GM12878 (cell line): ENCODE measurements at regions of chr12 and their contacts with region 1.

Region 1: DNA sequence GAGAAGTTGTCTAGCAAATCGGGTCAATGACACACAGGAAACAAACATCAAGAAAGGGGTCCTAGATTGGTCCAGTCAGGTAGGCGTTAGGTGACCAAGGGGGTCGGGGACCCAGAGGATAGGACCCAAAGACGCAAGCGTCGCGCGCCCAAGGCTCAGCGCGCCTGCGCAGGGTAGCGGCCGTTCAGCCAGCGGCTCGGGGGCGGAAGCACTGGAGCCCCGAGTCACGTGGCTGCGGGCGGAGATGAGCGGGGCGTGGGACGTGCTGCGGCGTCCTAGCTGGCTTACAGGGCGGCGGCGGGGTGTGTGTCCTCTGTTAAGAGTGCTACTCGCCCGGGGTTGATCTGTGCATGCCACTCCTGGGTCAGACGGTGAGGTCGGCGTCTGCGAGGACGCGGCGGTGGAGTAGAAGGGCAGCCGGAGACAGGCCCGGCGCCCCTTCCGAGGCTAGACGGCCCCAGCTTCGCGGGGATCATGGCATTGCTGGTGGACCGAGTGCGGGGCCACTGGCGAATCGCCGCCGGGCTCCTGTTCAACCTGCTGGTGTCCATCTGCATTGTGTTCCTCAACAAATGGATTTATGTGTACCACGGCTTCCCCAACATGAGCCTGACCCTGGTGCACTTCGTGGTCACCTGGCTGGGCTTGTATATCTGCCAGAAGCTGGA is at the start of gene SLC35E3:
- DNase-seq: peak; percentile 77
- ATAC-seq: peak; percentile 99
- H3K4me3 ChIP-seq: peak within 1 kb of the TSS; percentile 84
- H3K27ac ChIP-seq: peak within 1 kb of the TSS; percentile 75
- H3K4me1 ChIP-seq: no peaks in the 10 kb centered on the region
- H3K27me3 ChIP-seq: no peaks in the 10 kb centered on the region
- CTCF ChIP-seq: no peak
- EP300 ChIP-seq: no peak
- POLR2A ChIP-seq: peak; percentile 91; the same call in 1 of the 2 replicates
- RAD21 ChIP-seq: no peak
- polyA plus RNA-seq, gene SLC35E3: 3.6 to 6.0 TPM

Region 2: DNA sequence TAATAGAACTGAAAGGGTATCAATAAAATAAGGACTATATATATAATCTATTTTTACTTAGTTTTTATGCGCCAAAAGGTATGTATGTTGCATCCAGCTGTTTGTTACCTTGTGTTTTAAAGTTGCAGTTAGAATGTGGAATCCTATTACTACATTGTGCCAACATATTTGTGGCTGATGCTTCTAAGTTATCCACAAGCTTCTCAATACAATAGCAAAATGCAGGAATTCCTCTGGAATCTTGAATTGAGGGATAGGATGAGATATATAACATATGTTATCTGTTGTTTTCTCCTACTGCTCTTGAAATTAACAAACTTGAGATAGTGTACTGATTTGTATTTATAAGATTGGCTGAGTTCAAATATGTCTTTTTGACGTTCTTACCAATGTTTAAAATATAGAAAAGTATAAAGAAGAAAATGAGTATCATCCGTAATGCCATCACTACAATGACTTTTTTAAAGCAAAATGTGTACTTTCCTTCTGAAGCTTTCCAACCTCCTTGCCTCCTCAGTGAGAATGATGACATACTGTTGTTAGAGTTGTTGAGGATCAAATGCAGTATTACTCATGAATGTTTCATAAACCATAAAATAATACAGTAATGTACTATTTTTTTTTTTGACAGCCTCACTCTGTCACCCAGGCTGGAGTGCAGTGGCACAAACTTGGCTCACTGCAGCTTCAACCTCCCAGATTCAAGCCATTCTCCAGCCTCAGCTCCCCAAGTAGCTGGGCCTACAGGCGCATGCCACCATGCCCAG is 128.7 kb before region 1 on chr12:
- CTCF ChIA-PET with region 1: no interaction called
- POLR2A ChIA-PET with region 1: interaction called, 12 read pairs
- RAD21 ChIA-PET with region 1: interaction called, 7 read pairs
- SMC1A ChIA-PET with region 1: no interaction called
- in situ Hi-C with region 1: no loop called
- intact Hi-C with region 1: no loop called
- DNase-seq: no peak
- ATAC-seq: no peak
- H3K4me3 ChIP-seq: no peak overlapping the region
- H3K27ac ChIP-seq: no peak overlapping the region
- H3K4me1 ChIP-seq: peaks cover 23% of the 10 kb centered on the region
- H3K27me3 ChIP-seq: no peaks in the 10 kb centered on the region
- CTCF ChIP-seq: no peak
- EP300 ChIP-seq: no peak
- POLR2A ChIP-seq: no peak
- RAD21 ChIP-seq: no peak

Region 3: GRCh38 chr12:68786929-68787328 is 40.9 kb after region 1 on chr12:
- CTCF ChIA-PET with region 1: interaction called, 5 read pairs
- POLR2A ChIA-PET with region 1: interaction called, 4 read pairs
- RAD21 ChIA-PET with region 1: interaction called, 3 read pairs
- SMC1A ChIA-PET with region 1: interaction called, 12 read pairs
- in situ Hi-C with region 1: no loop called
- intact Hi-C with region 1: no loop called
- DNase-seq: no peak
- ATAC-seq: peak; percentile 31; the same call in 2 of the 3 replicates
- H3K4me3 ChIP-seq: no peak overlapping the region
- H3K27ac ChIP-seq: peak overlapping the region; percentile 49; the same call in 1 of the 2 replicates
- H3K4me1 ChIP-seq: no peaks in the 10 kb centered on the region; the same call in 1 of the 2 replicates
- H3K27me3 ChIP-seq: no peaks in the 10 kb centered on the region
- CTCF ChIP-seq: no peak; a peak in 1 of 6 replicates
- EP300 ChIP-seq: no peak
- POLR2A ChIP-seq: no peak
- RAD21 ChIP-seq: no peak